Caco-2 (cell line): ENCODE measurements at regions of chr4 and their contacts with region 1.

Region 1: DNA sequence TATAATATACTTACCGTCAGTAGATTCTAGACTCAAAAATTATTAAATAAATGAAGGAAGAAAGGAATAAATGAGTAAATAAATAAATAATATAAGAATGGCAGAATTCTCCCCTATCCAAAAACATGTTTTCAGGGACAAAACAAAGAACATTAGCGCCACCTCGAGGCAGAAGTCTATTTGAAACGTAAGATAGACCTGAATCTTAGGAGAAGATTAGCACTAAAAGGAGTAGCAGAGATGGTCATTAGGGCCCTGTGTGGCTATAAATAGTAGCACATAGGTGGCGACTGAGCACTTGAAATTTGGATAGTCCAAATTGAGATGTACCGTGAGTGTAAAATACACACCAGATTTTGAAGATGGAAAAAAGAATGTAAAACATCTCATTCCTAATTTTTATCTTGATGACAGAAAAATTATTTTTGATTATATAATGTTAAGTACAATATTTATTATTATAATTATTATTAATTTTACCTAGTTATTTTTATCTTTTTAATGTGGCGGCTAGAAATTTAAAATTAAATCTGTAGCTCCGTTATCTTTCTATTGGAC is 24.3 kb upstream of the SRD5A3 start:
- DNase-seq: peak; percentile 69 to 73
- H3K4me3 ChIP-seq: no peak overlapping the region
- H3K4me3 Mint-ChIP-seq: no peak overlapping the region
- H3K27ac Mint-ChIP-seq: no peak overlapping the region
- H3K4me1 ChIP-seq: no peaks in the 10 kb centered on the region
- H3K4me1 Mint-ChIP-seq: no peaks in the 10 kb centered on the region
- H3K27me3 ChIP-seq: no peaks in the 10 kb centered on the region
- H3K27me3 Mint-ChIP-seq: peaks cover 17% of the 10 kb centered on the region
- CTCF ChIP-seq: peak; percentile 43 to 49

Region 2: GRCh38 chr4:54971474-54971950 is 350.3 kb before region 1 on chr4:
- CTCF ChIA-PET with region 1: interaction called, 6 read pairs
- POLR2A ChIA-PET with region 1: no interaction called
- intact Hi-C with region 1: loop called (anchors 1 kb)
- DNase-seq: peak in 1 of 2 experiments; percentile 42
- H3K4me3 ChIP-seq: no peak overlapping the region
- H3K4me3 Mint-ChIP-seq: no peak overlapping the region
- H3K27ac Mint-ChIP-seq: no peak overlapping the region
- H3K4me1 ChIP-seq: no peaks in the 10 kb centered on the region
- H3K4me1 Mint-ChIP-seq: peaks cover 6% of the 10 kb centered on the region
- H3K27me3 ChIP-seq: no peaks in the 10 kb centered on the region
- H3K27me3 Mint-ChIP-seq: peaks cover 8% of the 10 kb centered on the region
- CTCF ChIP-seq: peak; percentile 52 to 86

Region 3: DNA sequence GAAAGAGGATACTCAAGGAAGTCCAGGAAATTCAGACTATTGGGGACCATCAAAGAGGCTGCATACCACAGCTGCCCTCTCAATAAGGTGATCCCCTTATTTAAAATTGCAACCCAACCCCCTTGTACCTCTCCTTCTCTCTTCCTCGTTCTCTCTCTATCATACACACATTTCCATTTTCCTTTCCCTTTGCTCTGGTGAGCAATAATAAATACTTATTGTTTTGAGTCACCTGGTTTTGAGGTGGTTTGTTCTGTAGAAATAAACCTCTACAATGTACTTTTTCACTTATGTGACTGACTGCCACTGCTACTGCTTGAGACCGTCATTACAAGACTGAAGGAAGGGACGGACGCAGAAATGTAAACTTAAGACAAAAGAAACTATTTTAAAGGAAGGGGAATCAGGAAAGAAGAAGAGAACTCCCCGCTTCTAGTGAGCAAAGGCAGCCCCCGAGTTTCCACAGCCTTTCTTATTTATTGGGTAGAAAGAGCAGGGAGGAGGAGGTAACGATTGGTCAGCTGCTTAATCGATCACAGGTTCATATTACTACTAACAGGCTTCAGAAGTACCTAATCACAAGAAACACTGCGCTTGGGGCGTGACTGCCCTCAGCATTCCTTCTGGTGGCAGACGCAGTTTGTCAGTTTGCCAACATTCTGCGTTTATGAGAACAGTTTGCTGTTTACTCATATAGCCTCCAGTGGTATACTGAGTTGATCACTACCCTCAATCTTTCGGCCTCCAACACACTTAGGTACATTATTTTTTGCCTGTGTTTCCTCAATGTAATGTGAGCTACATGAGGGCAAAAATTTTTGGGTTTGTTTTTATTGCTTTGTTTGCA is 57.1 kb after region 1 on chr4:
- CTCF ChIA-PET with region 1: no interaction called
- POLR2A ChIA-PET with region 1: no interaction called
- intact Hi-C with region 1: no loop called
- DNase-seq: no peak
- H3K4me3 ChIP-seq: no peak overlapping the region
- H3K4me3 Mint-ChIP-seq: no peak overlapping the region
- H3K27ac Mint-ChIP-seq: no peak overlapping the region
- H3K4me1 ChIP-seq: no peaks in the 10 kb centered on the region
- H3K4me1 Mint-ChIP-seq: no peaks in the 10 kb centered on the region
- H3K27me3 ChIP-seq: no peaks in the 10 kb centered on the region
- H3K27me3 Mint-ChIP-seq: no peaks in the 10 kb centered on the region
- CTCF ChIP-seq: no peak